Activated CD4-positive, alpha-beta memory T cell treated with anti-CD3 and anti-CD28 coated beads for 36 hours (primary cell): ENCODE measurements at regions of chr5 and their contacts with region 1.

Region 1: GRCh38 chr5:142769741-142770631 is at the start of gene ARHGAP26:
- DNase-seq: peak; percentile 96
- H3K4me3 Mint-ChIP-seq: peak within 1 kb of the TSS; percentile 92
- H3K27ac Mint-ChIP-seq: peak within 1 kb of the TSS; percentile 78
- H3K4me1 Mint-ChIP-seq: peaks cover 43% of the 10 kb centered on the region
- H3K27me3 Mint-ChIP-seq: no peaks in the 10 kb centered on the region
- total RNA-seq, gene ARHGAP26: 16.4 to 16.9 TPM

Region 2: DNA sequence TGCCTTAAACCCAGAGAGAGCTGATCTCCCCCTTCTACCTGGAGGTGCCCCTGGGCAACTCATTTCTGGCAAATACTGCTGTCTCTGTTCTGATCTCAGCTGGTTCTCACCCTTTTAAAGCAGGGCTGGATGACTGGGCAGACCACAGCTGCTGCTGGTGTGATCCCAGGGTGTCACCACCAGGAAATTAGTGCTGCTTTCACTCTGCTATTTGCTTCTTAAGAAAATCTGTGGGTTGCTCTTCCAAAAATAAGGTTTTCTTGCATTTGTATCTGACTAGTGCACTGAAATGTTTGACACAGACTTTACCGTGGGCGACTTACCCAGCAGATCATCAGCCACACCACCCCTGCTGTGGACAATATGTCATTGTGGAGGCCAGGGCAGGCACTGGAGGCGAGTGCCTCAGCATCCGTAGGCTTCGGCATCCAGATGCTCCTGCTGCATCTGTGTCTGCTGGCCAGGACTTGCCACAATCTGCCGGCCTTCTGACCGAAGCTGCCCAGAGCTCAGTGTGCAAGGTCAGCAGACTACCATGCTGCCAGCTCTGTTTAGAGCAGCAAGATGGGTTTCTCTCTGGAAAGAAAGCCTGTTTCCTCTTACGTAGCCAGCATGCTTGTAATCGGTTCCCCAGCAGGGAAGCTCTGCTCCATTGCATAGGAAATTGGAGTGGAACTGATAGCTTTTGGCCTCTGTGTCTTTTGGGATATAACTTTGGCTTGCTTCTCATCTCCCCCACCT is 13.8 kb after region 1 on chr5:
- CTCF ChIA-PET with region 1: interaction called, 43 read pairs
- POLR2A ChIA-PET with region 1: interaction called, 48 read pairs
- intact Hi-C with region 1: loop called (anchors 1 kb)
- DNase-seq: peak; percentile 90
- H3K4me3 Mint-ChIP-seq: peak overlapping the region; percentile 34
- H3K27ac Mint-ChIP-seq: peak overlapping the region; percentile 85
- H3K4me1 Mint-ChIP-seq: peaks cover 56% of the 10 kb centered on the region
- H3K27me3 Mint-ChIP-seq: no peaks in the 10 kb centered on the region

Region 3: GRCh38 chr5:142821733-142822487 is 51.9 kb after region 1 on chr5:
- CTCF ChIA-PET with region 1: interaction called, 29 read pairs
- POLR2A ChIA-PET with region 1: interaction called, 20 read pairs
- intact Hi-C with region 1: loop called (anchors 1 kb)
- DNase-seq: peak; percentile 35
- H3K4me3 Mint-ChIP-seq: no peak overlapping the region
- H3K27ac Mint-ChIP-seq: peak overlapping the region; percentile 83
- H3K4me1 Mint-ChIP-seq: peaks cover 71% of the 10 kb centered on the region
- H3K27me3 Mint-ChIP-seq: no peaks in the 10 kb centered on the region

Region 4: GRCh38 chr5:142862594-142862993 is 92.6 kb after region 1 on chr5:
- CTCF ChIA-PET with region 1: interaction called, 35 read pairs
- POLR2A ChIA-PET with region 1: no interaction called
- intact Hi-C with region 1: loop called (anchors 1 kb)
- DNase-seq: no peak
- H3K4me3 Mint-ChIP-seq: no peak overlapping the region
- H3K27ac Mint-ChIP-seq: no peak overlapping the region
- H3K4me1 Mint-ChIP-seq: peaks cover 25% of the 10 kb centered on the region
- H3K27me3 Mint-ChIP-seq: no peaks in the 10 kb centered on the region

Region 5: DNA sequence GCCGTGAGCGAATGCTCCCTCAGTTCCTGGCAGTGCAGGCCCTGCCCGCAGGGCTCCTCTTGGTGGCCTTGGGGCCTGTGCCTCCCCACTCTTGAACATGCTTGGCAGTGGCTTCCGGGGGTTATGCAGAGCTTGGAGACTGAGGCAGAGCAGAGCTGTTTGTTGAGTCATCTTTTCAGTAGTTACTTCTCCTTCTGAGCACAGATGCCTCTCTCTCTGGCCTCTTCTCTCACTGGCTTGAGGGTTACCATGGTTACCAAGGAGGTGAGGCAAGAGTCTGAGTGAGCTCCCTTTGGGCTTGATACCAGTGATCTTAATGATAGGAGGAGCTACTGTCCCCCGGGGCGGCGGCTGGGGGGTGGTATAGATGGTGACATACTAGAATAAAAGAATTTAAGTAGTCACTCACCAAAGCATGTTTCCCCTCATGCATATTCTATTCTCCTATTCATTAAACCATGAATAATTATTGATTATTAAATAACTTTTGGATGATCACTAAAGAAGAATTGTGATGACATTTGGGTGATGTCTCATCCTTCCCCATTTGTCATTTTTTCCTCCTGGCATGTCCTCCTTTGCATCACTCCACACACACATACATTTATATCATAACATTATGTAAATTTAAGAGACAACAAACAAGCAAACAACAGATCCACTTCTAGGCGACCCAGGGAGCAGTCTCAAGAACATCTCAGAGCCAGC is 111.2 kb after region 1 on chr5:
- CTCF ChIA-PET with region 1: interaction called, 11 read pairs
- POLR2A ChIA-PET with region 1: no interaction called
- intact Hi-C with region 1: no loop called
- DNase-seq: no peak
- H3K4me3 Mint-ChIP-seq: no peak overlapping the region
- H3K27ac Mint-ChIP-seq: no peak overlapping the region
- H3K4me1 Mint-ChIP-seq: no peaks in the 10 kb centered on the region
- H3K27me3 Mint-ChIP-seq: no peaks in the 10 kb centered on the region